GM10248 (cell line): ENCODE measurements at regions of chr11 and their contacts with region 1.

Region 1: GRCh38 chr11:47538741-47539574 is 14.0 kb downstream of the CELF1 start:
- DNase-seq: no peak
- CTCF ChIP-seq: no peak

Region 2: GRCh38 chr11:47464483-47464882 is 74.5 kb before region 1 on chr11:
- CTCF ChIA-PET with region 1: no interaction called
- POLR2A ChIA-PET with region 1: no interaction called
- DNase-seq: no peak
- CTCF ChIP-seq: no peak

Region 3: DNA sequence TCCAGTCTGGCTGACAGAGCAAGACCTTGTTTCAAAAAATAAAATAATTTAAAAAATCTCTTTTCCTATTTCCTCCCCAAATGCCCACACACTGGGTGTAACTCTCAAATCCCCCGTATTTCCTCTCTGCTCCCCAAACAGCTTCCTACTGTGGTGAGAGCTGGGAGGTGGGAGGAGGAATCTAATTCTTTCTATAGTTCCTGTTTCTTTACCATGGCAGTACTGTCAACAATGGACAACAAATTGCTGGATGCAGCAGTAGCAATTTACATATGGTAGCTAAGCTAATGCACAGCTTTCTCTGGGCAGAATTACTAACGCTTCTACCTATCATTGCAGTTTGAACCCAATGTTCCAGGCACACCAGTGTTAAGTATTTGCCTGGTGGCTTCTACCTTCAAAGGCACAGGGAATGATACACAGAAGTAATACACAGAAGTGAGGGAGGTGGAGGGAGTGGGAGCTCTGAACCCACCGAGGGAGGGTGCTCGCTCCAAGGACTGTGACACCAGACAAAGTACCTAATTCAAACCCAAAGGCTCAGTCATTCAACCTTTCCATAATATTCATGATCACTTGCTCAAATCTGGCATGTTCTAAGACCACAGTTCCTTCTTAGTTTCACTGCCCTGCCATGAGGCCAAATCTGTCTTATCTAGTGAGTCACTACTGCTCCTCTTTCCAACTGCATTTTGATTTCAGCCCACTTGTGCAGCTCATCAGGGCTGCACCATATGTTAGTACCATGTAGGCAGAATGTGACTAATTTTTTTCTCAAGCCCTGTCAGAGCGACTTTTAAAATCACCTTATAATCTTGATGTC is 23.9 kb before region 1 on chr11:
- CTCF ChIA-PET with region 1: interaction called, 10 read pairs
- POLR2A ChIA-PET with region 1: no interaction called
- DNase-seq: no peak
- CTCF ChIP-seq: no peak